ENCODE measurements at regions of chr10 and their contacts with region 1.

Region 1: GRCh38 chr10:67779465-67780203 is 58.4 kb downstream of the DNAJC12 start:
- DNase-seq: peak; percentile 87
- H3K4me3 Mint-ChIP-seq: no peak overlapping the region
- H3K27ac Mint-ChIP-seq: no peak overlapping the region
- H3K4me1 Mint-ChIP-seq: no peaks in the 10 kb centered on the region
- H3K27me3 Mint-ChIP-seq: no peaks in the 10 kb centered on the region
- CTCF ChIP-seq: peak; percentile 81

Region 2: DNA sequence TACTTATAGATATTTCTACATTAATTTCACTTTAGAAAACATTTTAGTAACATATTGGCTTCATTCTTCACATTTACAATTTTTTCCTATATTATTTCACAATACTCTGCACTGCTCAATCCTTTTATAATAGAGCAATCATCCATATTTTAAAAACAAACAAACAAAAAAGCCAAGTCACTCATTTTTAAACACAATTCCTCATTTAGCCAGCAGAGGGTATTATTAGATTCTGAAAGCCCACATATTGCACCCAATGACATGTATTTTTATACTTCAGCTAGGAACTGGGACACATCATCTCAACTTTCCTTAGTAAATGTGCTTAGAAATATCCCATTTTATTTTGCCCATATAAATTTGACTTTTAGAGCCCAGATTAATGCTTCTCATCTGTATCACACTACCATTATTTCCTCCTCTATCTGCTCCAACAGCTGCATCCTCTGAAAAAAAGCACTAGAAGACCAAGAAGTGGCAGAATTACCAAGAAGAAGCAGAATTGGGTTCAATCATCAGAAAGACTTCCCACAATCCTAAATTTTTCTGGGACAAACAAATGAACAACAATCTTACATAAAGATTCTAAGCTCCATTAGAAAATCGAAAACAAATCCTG is 113.1 kb before region 1 on chr10:
- CTCF ChIA-PET with region 1: interaction called, 59 read pairs
- POLR2A ChIA-PET with region 1: no interaction called
- intact Hi-C with region 1: loop called (anchors 1 kb)
- DNase-seq: peak; percentile 47
- H3K4me3 Mint-ChIP-seq: no peak overlapping the region
- H3K27ac Mint-ChIP-seq: no peak overlapping the region
- H3K4me1 Mint-ChIP-seq: no peaks in the 10 kb centered on the region
- H3K27me3 Mint-ChIP-seq: peaks cover 17% of the 10 kb centered on the region
- CTCF ChIP-seq: peak; percentile 31

Region 3: GRCh38 chr10:67678335-67678974 is 101.2 kb before region 1 on chr10:
- CTCF ChIA-PET with region 1: no interaction called
- POLR2A ChIA-PET with region 1: no interaction called
- intact Hi-C with region 1: no loop called
- DNase-seq: no peak
- H3K4me3 Mint-ChIP-seq: no peak overlapping the region
- H3K27ac Mint-ChIP-seq: no peak overlapping the region
- H3K4me1 Mint-ChIP-seq: no peaks in the 10 kb centered on the region
- H3K27me3 Mint-ChIP-seq: peaks cover 59% of the 10 kb centered on the region
- CTCF ChIP-seq: no peak

Region 4: GRCh38 chr10:67697724-67698131 is 81.9 kb before region 1 on chr10:
- CTCF ChIA-PET with region 1: interaction called, 174 read pairs
- POLR2A ChIA-PET with region 1: interaction called, 17 read pairs
- intact Hi-C with region 1: loop called (anchors 1 kb)
- DNase-seq: peak; percentile 64
- H3K4me3 Mint-ChIP-seq: no peak overlapping the region
- H3K27ac Mint-ChIP-seq: no peak overlapping the region
- H3K4me1 Mint-ChIP-seq: no peaks in the 10 kb centered on the region
- H3K27me3 Mint-ChIP-seq: peaks cover 26% of the 10 kb centered on the region
- CTCF ChIP-seq: peak; percentile 58

Region 5: DNA sequence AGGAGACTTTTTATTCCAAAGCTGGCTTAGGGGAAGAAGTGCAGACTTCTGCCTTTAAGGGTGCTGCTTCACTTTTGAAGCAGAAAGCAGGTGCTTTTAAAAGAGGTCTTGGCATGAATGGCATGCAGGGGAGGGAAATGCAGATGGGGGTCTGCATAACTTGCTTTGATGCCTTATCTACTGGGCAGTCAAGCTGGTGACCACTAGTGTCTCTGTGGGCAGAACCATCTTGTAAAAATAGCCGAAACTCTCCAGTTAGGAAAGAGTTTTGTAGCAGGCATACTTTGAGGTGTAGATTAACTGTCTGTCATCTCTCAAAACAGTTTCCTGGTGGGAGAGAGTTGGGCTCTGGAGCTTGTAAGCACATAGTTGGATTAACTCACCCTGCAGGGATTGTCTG is 73.7 kb before region 1 on chr10:
- CTCF ChIA-PET with region 1: interaction called, 18 read pairs
- POLR2A ChIA-PET with region 1: no interaction called
- intact Hi-C with region 1: no loop called
- DNase-seq: no peak
- H3K4me3 Mint-ChIP-seq: no peak overlapping the region
- H3K27ac Mint-ChIP-seq: no peak overlapping the region
- H3K4me1 Mint-ChIP-seq: no peaks in the 10 kb centered on the region
- H3K27me3 Mint-ChIP-seq: peaks cover 36% of the 10 kb centered on the region
- CTCF ChIP-seq: no peak

Region 6: GRCh38 chr10:67764012-67764822 is 15.4 kb before region 1 on chr10:
- CTCF ChIA-PET with region 1: interaction called, 35 read pairs
- POLR2A ChIA-PET with region 1: interaction called, 5 read pairs
- intact Hi-C with region 1: no loop called
- DNase-seq: peak; percentile 93
- H3K4me3 Mint-ChIP-seq: peak overlapping the region; percentile 82
- H3K27ac Mint-ChIP-seq: peak overlapping the region; percentile 75
- H3K4me1 Mint-ChIP-seq: no peaks in the 10 kb centered on the region
- H3K27me3 Mint-ChIP-seq: no peaks in the 10 kb centered on the region
- CTCF ChIP-seq: no peak

Region 7: GRCh38 chr10:67794909-67795460 is 15.4 kb after region 1 on chr10:
- CTCF ChIA-PET with region 1: interaction called, 39 read pairs
- POLR2A ChIA-PET with region 1: no interaction called
- intact Hi-C with region 1: no loop called
- DNase-seq: no peak
- H3K4me3 Mint-ChIP-seq: no peak overlapping the region
- H3K27ac Mint-ChIP-seq: no peak overlapping the region
- H3K4me1 Mint-ChIP-seq: peaks cover 20% of the 10 kb centered on the region
- H3K27me3 Mint-ChIP-seq: no peaks in the 10 kb centered on the region
- CTCF ChIP-seq: no peak

Region 8: GRCh38 chr10:67943909-67944308 is 164.3 kb after region 1 on chr10:
- CTCF ChIA-PET with region 1: no interaction called
- POLR2A ChIA-PET with region 1: no interaction called
- intact Hi-C with region 1: no loop called
- DNase-seq: no peak
- H3K4me3 Mint-ChIP-seq: no peak overlapping the region
- H3K27ac Mint-ChIP-seq: no peak overlapping the region
- H3K4me1 Mint-ChIP-seq: no peaks in the 10 kb centered on the region
- H3K27me3 Mint-ChIP-seq: no peaks in the 10 kb centered on the region
- CTCF ChIP-seq: no peak

Measured in MCF 10A (cell line).